CD8-positive, alpha-beta T cell (primary cell): ENCODE measurements at regions of chr6 and their contacts with region 1.

Region 1: DNA sequence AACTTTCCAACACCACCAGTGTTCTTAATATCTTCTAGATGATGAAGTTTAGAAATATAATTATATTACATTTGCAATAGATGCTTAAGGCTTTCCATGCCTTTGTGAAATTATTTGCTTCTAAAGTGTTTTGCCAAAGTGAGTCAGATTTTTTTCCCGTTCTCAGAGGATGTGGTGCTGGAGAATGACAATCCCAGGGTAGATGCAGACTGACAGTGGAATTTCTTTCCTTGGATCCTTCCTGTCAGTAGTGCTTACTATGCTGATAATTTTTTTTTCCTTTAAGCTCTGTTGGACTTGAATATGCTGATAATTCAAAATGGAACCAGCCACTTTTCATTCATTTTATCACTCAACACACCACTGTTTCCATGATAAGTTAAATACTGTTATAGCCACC is 59.9 kb upstream of the SOX4 start:
- DNase-seq: no peak
- ATAC-seq: no peak
- H3K4me3 ChIP-seq: no peak overlapping the region
- H3K4me3 Mint-ChIP-seq: no peak overlapping the region
- H3K27ac ChIP-seq: no peak overlapping the region
- H3K27ac Mint-ChIP-seq: no peak overlapping the region
- H3K4me1 ChIP-seq: no peaks in the 10 kb centered on the region
- H3K4me1 Mint-ChIP-seq: no peaks in the 10 kb centered on the region
- H3K27me3 ChIP-seq: no peaks in the 10 kb centered on the region
- H3K27me3 Mint-ChIP-seq: peaks cover 2% of the 10 kb centered on the region
- CTCF ChIP-seq: no peak

Region 2: DNA sequence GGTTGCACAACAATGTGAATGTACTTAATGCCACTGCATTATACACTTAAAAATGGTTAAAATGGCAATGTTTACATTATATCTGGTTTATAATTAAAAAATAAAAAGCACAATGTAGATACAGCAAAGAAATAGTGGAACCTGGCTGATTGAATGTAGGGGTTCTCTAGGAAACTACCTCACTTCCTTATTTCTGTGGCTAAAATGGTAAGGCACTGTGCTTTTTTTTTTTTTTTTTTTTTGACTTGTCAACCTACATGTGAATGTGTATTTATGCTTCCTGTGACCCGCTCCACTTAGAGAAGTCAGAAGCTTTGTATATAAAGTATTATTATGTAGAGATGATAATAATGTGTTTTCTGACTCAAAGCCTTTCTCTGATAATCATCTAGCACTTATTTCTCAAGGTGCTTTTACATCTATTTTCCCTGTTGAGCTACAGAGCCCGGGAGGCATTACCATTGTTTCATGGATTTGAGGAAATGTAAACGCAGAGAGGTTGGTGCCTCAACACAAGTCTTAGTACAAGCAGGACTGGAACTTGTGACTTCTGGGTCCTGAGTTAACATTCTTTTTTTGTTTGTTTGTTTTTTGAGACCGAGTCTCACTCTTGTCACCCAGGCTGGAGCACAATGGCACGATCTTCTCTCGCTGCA is 114.9 kb after region 1 on chr6:
- CTCF ChIA-PET with region 1: no interaction called
- POLR2A ChIA-PET with region 1: no interaction called
- intact Hi-C with region 1: loop called in 1 of 2 experiments (anchors 5 kb)
- DNase-seq: no peak
- ATAC-seq: no peak
- H3K4me3 ChIP-seq: no peak overlapping the region
- H3K4me3 Mint-ChIP-seq: no peak overlapping the region
- H3K27ac ChIP-seq: no peak overlapping the region
- H3K27ac Mint-ChIP-seq: no peak overlapping the region
- H3K4me1 ChIP-seq: no peaks in the 10 kb centered on the region
- H3K4me1 Mint-ChIP-seq: no peaks in the 10 kb centered on the region
- H3K27me3 ChIP-seq: no peaks in the 10 kb centered on the region
- H3K27me3 Mint-ChIP-seq: peaks cover 5% of the 10 kb centered on the region
- CTCF ChIP-seq: no peak